CD8-positive, alpha-beta T cell (primary cell): ENCODE measurements at regions of chr10 and their contacts with region 1.

Region 1: DNA sequence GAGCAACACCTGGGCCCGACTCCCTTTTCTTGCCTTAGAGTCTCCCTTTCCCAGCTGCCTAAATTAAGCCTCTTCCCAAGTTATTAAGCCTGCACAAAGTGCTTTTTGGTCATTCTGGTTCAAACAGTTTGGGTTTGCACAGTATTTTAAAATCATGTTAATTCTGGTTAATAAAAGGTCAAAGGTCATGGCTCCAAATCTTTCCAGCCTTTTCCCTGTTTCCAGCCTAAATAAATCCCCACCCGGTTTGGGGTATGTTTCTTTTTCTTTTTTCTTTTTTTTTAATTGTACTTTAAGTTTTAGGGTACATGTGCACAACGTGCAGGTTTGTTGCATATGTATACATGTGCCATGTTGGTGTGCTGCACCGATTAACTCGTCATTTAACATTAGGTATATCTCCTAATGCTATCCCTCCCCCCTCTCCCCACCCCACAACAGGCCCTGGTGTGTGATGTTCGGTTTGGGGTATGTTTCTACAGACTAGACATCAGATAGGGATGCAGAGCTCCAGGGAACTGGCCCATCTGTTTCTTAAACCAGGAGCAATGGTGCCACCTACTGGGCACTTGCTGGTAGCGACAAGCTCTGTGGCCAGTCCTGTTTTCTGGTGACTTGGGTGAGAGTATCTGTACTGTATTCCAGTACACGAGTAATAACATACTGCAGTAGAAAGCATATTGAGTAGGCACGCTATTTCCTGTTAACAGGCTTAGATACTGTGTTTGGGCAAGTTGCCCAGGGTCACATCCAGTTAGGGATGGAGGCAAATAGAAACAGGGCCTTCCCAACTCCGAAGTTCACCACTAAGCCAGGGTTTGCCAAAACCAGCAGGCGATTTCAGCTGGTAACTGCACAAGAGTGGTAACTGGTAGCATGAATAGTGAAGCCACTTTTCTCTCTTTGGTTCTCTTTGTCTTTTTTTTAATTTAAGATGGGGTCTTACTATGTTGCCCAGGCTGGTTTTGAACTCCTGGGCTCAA is 60.6 kb upstream of the TRIM8 start:
- DNase-seq: peak; percentile 67 to 87 (median 82)
- ATAC-seq: peak; percentile 98
- H3K4me3 ChIP-seq: no peak overlapping the region
- H3K4me3 Mint-ChIP-seq: no peak overlapping the region
- H3K27ac ChIP-seq: no peak overlapping the region
- H3K27ac Mint-ChIP-seq: no peak overlapping the region
- H3K4me1 ChIP-seq: no peaks in the 10 kb centered on the region
- H3K4me1 Mint-ChIP-seq: peaks cover 4% of the 10 kb centered on the region
- H3K27me3 ChIP-seq: no peaks in the 10 kb centered on the region
- H3K27me3 Mint-ChIP-seq: no peaks in the 10 kb centered on the region
- CTCF ChIP-seq: peak; percentile 78

Region 2: DNA sequence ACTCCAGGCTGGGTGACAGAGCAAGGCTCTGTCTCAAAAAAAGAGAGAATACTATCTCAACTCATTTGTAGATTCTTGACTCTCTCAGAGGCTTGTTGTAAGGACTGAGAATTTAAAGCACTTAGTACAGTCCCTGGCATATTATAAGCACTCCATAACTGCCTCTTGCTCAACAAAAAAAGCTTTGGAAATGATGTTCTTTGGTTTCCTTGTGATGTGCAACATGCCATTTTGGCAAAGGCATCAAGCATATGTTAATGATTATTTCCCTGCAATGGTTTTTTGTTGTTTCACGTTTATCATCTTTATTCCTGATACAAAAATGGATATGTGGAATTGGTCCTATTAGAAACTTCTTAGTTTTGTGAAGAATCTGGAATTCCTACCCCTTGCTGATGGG is 415.9 kb before region 1 on chr10:
- CTCF ChIA-PET with region 1: interaction called, 3 read pairs
- POLR2A ChIA-PET with region 1: no interaction called
- intact Hi-C with region 1: loop called in 1 of 2 experiments (anchors 2 kb)
- DNase-seq: no peak
- ATAC-seq: no peak
- H3K4me3 ChIP-seq: no peak overlapping the region
- H3K4me3 Mint-ChIP-seq: no peak overlapping the region
- H3K27ac ChIP-seq: no peak overlapping the region
- H3K27ac Mint-ChIP-seq: no peak overlapping the region
- H3K4me1 ChIP-seq: peaks cover 4% of the 10 kb centered on the region
- H3K4me1 Mint-ChIP-seq: peaks cover 6% of the 10 kb centered on the region
- H3K27me3 ChIP-seq: peaks cover 0 to 3% of the 10 kb centered on the region in 2 experiments
- H3K27me3 Mint-ChIP-seq: no peaks in the 10 kb centered on the region
- CTCF ChIP-seq: no peak

Region 3: DNA sequence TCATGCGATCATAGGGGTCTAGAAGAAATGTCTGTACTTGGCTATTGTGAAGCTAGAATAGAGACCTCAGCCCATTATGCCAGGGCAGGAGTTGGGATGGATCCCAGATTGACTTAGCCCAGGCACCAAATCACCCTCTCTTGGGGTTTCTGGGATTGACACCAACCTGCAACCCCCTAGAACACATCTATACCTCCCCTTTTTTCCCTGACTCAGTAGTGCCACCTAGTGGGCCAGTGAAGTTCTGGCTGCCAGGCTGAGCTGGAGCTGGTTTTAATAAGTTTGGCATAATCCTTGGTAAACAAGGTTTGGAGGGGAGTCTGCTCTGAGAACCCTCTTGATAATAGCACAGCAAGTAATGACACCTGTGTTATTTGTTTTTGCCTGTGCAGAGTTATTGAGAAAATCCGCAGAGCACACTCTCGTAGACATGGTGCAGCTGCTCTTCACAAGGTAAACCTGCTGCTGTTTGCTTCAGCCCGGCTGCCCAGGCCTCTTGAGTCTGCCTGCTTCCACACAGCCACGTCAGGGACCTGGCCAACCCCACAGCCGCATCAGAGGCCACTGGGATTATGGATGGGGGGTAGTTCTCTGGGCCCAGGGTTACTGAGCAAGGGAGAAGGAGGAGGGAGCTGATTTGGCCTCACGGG is 231.5 kb before region 1 on chr10:
- CTCF ChIA-PET with region 1: interaction called, 13 read pairs
- POLR2A ChIA-PET with region 1: no interaction called
- intact Hi-C with region 1: no loop called
- DNase-seq: peak; percentile 43 to 81 (median 75)
- ATAC-seq: peak; percentile 88
- H3K4me3 ChIP-seq: no peak overlapping the region
- H3K4me3 Mint-ChIP-seq: no peak overlapping the region
- H3K27ac ChIP-seq: no peak overlapping the region
- H3K27ac Mint-ChIP-seq: no peak overlapping the region
- H3K4me1 ChIP-seq: no peaks in the 10 kb centered on the region
- H3K4me1 Mint-ChIP-seq: no peaks in the 10 kb centered on the region
- H3K27me3 ChIP-seq: no peaks in the 10 kb centered on the region
- H3K27me3 Mint-ChIP-seq: no peaks in the 10 kb centered on the region
- CTCF ChIP-seq: peak; percentile 97

Region 4: DNA sequence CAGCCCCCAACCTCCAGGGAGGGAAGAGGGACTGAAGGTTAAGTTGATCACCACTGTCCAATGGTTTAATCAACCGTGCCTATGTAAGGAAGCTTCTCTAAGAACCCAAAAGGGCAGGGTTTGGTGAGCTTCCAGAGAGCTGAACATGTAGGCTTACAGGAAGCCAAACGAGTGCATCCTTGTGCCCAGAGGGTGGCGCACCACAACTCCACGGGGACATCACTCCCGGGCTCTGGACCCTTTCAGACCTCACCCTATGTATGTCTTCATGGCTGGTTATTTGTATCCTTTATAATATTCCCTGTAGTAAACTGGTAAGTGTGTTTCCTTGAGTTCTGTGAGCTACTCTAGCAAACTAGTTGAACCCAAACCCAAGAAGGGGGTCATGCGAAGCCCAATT is 199.7 kb before region 1 on chr10:
- CTCF ChIA-PET with region 1: interaction called, 12 read pairs
- POLR2A ChIA-PET with region 1: no interaction called
- intact Hi-C with region 1: no loop called
- DNase-seq: peak in 4 of 9 experiments; percentile 26 to 52 (median 38)
- ATAC-seq: peak; percentile 42
- H3K4me3 ChIP-seq: no peak overlapping the region
- H3K4me3 Mint-ChIP-seq: no peak overlapping the region
- H3K27ac ChIP-seq: no peak overlapping the region
- H3K27ac Mint-ChIP-seq: no peak overlapping the region
- H3K4me1 ChIP-seq: no peaks in the 10 kb centered on the region
- H3K4me1 Mint-ChIP-seq: no peaks in the 10 kb centered on the region
- H3K27me3 ChIP-seq: no peaks in the 10 kb centered on the region
- H3K27me3 Mint-ChIP-seq: no peaks in the 10 kb centered on the region
- CTCF ChIP-seq: no peak

Region 5: DNA sequence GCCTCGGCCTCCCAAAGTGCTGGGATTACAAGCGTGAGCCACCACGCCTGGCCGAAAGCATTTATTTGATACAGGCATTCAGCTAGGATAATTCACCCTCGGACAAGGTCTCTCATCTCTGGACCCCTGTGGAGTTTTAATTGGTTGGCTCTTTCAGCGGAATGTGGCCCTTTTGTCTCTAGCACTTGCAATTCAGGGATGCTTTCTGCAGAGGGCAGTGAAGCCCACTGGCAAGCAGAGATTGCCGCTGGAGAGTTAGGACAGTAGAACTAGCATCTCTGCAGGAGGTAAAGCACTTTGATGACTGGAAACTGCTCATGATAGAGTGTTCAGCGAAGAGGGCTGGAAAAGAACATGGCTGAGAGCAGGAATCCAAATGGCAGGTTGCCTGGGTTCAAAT is 17.9 kb before region 1 on chr10:
- CTCF ChIA-PET with region 1: interaction called, 18 read pairs
- POLR2A ChIA-PET with region 1: no interaction called
- intact Hi-C with region 1: no loop called
- DNase-seq: no peak
- ATAC-seq: no peak
- H3K4me3 ChIP-seq: no peak overlapping the region
- H3K4me3 Mint-ChIP-seq: no peak overlapping the region
- H3K27ac ChIP-seq: no peak overlapping the region
- H3K27ac Mint-ChIP-seq: no peak overlapping the region
- H3K4me1 ChIP-seq: no peaks in the 10 kb centered on the region
- H3K4me1 Mint-ChIP-seq: peaks cover 5% of the 10 kb centered on the region
- H3K27me3 ChIP-seq: no peaks in the 10 kb centered on the region
- H3K27me3 Mint-ChIP-seq: no peaks in the 10 kb centered on the region
- CTCF ChIP-seq: no peak